ENCODE measurements at regions of chr3 and their contacts with region 1.

Region 1: GRCh38 chr3:43256714-43257461 is 29.5 kb upstream of the SNRK start:
- DNase-seq: peak in 1 of 35 experiments; percentile 15
- ATAC-seq: peak in 1 of 4 experiments; percentile 26
- H3K4me3 ChIP-seq: no peak overlapping the region
- H3K4me3 Mint-ChIP-seq: no peak overlapping the region
- H3K27ac ChIP-seq: no peak overlapping the region
- H3K27ac Mint-ChIP-seq: peak overlapping the region in 1 of 2 donors; percentile 23
- H3K4me1 ChIP-seq: peaks cover 2 to 19% of the 10 kb centered on the region in 2 experiments
- H3K4me1 Mint-ChIP-seq: peaks cover 30 to 32% (median 31%) of the 10 kb centered on the region in 3 donors
- H3K27me3 ChIP-seq: peaks cover 0 to 4% of the 10 kb centered on the region in 2 experiments
- H3K27me3 Mint-ChIP-seq: no peaks in the 10 kb centered on the region

Region 2: GRCh38 chr3:43144761-43145490 is 112.0 kb before region 1 on chr3:
- CTCF ChIA-PET with region 1: interaction called in 1 of 2 experiments, 10 read pairs
- POLR2A ChIA-PET with region 1: no interaction called
- DNase-seq: no peak
- ATAC-seq: no peak
- H3K4me3 ChIP-seq: no peak overlapping the region
- H3K4me3 Mint-ChIP-seq: no peak overlapping the region
- H3K27ac ChIP-seq: no peak overlapping the region
- H3K27ac Mint-ChIP-seq: no peak overlapping the region
- H3K4me1 ChIP-seq: no peaks in the 10 kb centered on the region
- H3K4me1 Mint-ChIP-seq: peaks cover 3 to 9% (median 6%) of the 10 kb centered on the region in 3 donors
- H3K27me3 ChIP-seq: peaks cover 0 to 6% of the 10 kb centered on the region in 2 experiments
- H3K27me3 Mint-ChIP-seq: peaks cover 0 to 4% of the 10 kb centered on the region in 2 donors